Motor neuron (in vitro differentiated cells): ENCODE measurements at regions of chr4 and their contacts with region 1.

Region 1: DNA sequence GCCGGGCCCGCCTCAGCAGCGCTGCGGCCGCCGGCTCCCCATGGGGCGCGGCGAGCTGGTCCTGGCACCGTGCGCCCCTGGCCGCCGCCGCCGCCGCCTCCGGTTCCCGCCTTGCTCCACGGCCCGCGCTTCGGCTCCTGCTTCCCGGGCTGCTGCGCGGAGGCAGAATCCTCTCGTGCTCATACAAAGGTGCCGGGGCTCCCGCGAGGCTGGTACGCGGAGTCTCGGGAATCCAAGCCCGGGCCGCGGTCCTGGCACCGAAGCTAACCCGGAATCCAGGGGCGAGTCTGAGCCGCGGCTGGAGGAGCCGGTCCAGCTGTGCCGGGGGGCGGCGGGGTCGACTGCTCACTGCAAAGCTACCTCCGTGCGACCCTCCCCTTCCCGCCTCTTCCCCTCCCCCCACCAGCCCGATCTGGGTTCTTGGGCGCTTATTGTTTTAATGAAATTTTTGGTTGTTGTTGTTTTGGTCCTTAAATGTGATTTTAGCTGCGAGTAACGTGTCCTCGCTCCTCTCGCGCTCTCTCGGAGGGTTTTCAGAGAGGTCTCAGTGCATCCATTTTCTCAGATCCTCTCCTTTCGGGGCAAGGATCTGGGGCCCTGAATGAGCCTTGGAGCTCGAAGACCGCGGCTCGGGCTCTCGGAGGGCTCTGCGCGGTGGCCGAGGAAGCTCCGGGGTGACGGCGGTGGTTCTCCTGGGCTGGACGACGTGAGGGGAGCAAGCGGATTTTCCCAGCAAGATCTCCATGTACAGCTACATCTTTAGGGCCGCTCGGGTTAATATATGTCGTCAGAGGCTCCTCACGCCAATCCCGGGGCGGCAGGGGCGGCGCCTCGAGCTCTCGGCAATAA is at the start of gene HAND2:
- ATAC-seq: peak; percentile 12 to 85 (median 56)
- H3K4me3 ChIP-seq: peak within 1 kb of the TSS; percentile 12 to 45 (median 24)
- H3K27ac ChIP-seq: no peak within 1 kb of the TSS
- H3K4me1 ChIP-seq: peaks cover 7 to 8% of the 10 kb centered on the region in 2 donors
- total RNA-seq, gene HAND2: 0.05 to 11.4 (median 0.64) TPM

Region 2: GRCh38 chr4:174036111-174036510 is 506.4 kb after region 1 on chr4:
- in situ Hi-C with region 1: no loop called
- ATAC-seq: no peak
- H3K4me3 ChIP-seq: no peak overlapping the region
- H3K27ac ChIP-seq: no peak overlapping the region
- H3K4me1 ChIP-seq: no peaks in the 10 kb centered on the region

Region 3: DNA sequence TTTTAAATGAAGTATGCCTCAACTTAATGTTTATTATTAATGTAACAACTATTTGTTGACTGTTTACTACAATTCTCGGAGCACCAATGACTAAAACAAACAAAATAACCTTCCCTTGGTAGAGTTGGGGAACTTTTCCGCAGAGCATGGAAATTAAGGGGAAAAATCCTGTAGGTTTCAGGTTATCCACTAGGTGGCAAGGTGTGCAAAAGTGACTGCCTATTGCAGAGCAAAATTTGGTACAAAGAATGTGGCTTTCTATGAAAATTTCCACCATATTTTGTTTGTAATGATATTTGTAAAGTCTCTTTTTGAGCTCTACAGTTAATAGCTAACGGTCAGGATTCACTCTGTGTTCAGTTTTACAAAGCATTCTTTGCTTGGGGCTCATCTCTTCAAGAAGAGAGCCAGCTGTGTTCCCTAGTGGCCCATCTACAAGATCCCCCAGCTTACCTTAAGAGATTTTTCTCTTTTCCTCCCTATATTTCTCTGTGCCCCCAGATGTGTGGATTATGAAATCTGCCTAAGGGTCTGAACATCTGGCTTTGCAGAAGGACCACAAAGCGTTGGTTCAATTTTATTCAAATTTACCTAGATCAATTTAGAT is 692.7 kb after region 1 on chr4:
- in situ Hi-C with region 1: loop called in 3 of 9 experiments (anchors 25 kb)
- ATAC-seq: peak in 2 of 8 experiments; percentile 44 to 54
- H3K4me3 ChIP-seq: no peak overlapping the region
- H3K27ac ChIP-seq: no peak overlapping the region
- H3K4me1 ChIP-seq: peaks cover 6 to 7% of the 10 kb centered on the region in 2 donors